Natural killer cell (primary cell): ENCODE measurements at regions of chr10 and their contacts with region 1.

Region 1: GRCh38 chr10:62414359-62414758 is 40.2 kb downstream of the ZNF365 start:
- DNase-seq: peak in 1 of 2 donors; percentile 17
- ATAC-seq: no peak
- H3K4me3 ChIP-seq: no peak overlapping the region
- H3K4me3 Mint-ChIP-seq: no peak overlapping the region
- H3K27ac ChIP-seq: no peak overlapping the region
- H3K27ac Mint-ChIP-seq: no peak overlapping the region
- H3K4me1 ChIP-seq: no peaks in the 10 kb centered on the region
- H3K4me1 Mint-ChIP-seq: peaks cover 0 to 5% of the 10 kb centered on the region in 2 donors
- H3K27me3 ChIP-seq: peaks cover 18% of the 10 kb centered on the region
- H3K27me3 Mint-ChIP-seq: peaks cover 31 to 59% of the 10 kb centered on the region in 2 donors
- CTCF ChIP-seq: no peak

Region 2: GRCh38 chr10:62268399-62269114 is 145.8 kb before region 1 on chr10 and contains the start of gene RTKN2:
- intact Hi-C with region 1: loop called (anchors 1 kb)
- DNase-seq: peak; percentile 65 to 79
- ATAC-seq: peak; percentile 89 to 93 (median 89)
- H3K4me3 ChIP-seq: peak within 1 kb of the TSS; percentile 79
- H3K4me3 Mint-ChIP-seq: peak within 1 kb of the TSS; percentile 94
- H3K27ac ChIP-seq: no peak within 1 kb of the TSS
- H3K27ac Mint-ChIP-seq: peak within 1 kb of the TSS; percentile 34 to 74
- H3K4me1 ChIP-seq: peaks cover 11% of the 10 kb centered on the region
- H3K4me1 Mint-ChIP-seq: peaks cover 17 to 28% of the 10 kb centered on the region in 2 donors
- H3K27me3 ChIP-seq: peaks cover 15% of the 10 kb centered on the region
- H3K27me3 Mint-ChIP-seq: peaks cover 15% of the 10 kb centered on the region in 2 donors
- CTCF ChIP-seq: no peak
- total RNA-seq, gene RTKN2: 0.31 to 0.61 (median 0.33) TPM

Region 3: GRCh38 chr10:62323751-62324150 is 90.6 kb before region 1 on chr10:
- intact Hi-C with region 1: no loop called
- DNase-seq: no peak
- ATAC-seq: no peak
- H3K4me3 ChIP-seq: no peak overlapping the region
- H3K4me3 Mint-ChIP-seq: no peak overlapping the region
- H3K27ac ChIP-seq: no peak overlapping the region
- H3K27ac Mint-ChIP-seq: no peak overlapping the region
- H3K4me1 ChIP-seq: no peaks in the 10 kb centered on the region
- H3K4me1 Mint-ChIP-seq: no peaks in the 10 kb centered on the region
- H3K27me3 ChIP-seq: peaks cover 4% of the 10 kb centered on the region
- H3K27me3 Mint-ChIP-seq: peaks cover 15 to 39% of the 10 kb centered on the region in 2 donors
- CTCF ChIP-seq: no peak

Region 4: GRCh38 chr10:62492012-62492869 is 77.9 kb after region 1 on chr10:
- intact Hi-C with region 1: no loop called
- DNase-seq: peak in 1 of 2 donors; percentile 57
- ATAC-seq: no peak
- H3K4me3 ChIP-seq: no peak overlapping the region
- H3K4me3 Mint-ChIP-seq: no peak overlapping the region
- H3K27ac ChIP-seq: no peak overlapping the region
- H3K27ac Mint-ChIP-seq: no peak overlapping the region
- H3K4me1 ChIP-seq: peaks cover 7% of the 10 kb centered on the region
- H3K4me1 Mint-ChIP-seq: peaks cover 5 to 9% of the 10 kb centered on the region in 2 donors
- H3K27me3 ChIP-seq: peaks cover under 1% of the 10 kb centered on the region
- H3K27me3 Mint-ChIP-seq: peaks cover 7 to 17% of the 10 kb centered on the region in 2 donors
- CTCF ChIP-seq: peak; percentile 25